CD4-positive, alpha-beta T cell (primary cell): ENCODE measurements at regions of chr18 and their contacts with region 1.

Region 1: GRCh38 chr18:63410792-63411191 is 11.5 kb downstream of the VPS4B start:
- DNase-seq: no peak
- ATAC-seq: no peak
- H3K4me3 ChIP-seq: no peak overlapping the region
- H3K4me3 Mint-ChIP-seq: no peak overlapping the region
- H3K27ac ChIP-seq: no peak overlapping the region
- H3K27ac Mint-ChIP-seq: peak overlapping the region; percentile 73
- H3K4me1 ChIP-seq: peaks cover 11% of the 10 kb centered on the region
- H3K4me1 Mint-ChIP-seq: peaks cover 57% of the 10 kb centered on the region
- H3K27me3 ChIP-seq: no peaks in the 10 kb centered on the region
- H3K27me3 Mint-ChIP-seq: no peaks in the 10 kb centered on the region
- CTCF ChIP-seq: no peak

Region 2: DNA sequence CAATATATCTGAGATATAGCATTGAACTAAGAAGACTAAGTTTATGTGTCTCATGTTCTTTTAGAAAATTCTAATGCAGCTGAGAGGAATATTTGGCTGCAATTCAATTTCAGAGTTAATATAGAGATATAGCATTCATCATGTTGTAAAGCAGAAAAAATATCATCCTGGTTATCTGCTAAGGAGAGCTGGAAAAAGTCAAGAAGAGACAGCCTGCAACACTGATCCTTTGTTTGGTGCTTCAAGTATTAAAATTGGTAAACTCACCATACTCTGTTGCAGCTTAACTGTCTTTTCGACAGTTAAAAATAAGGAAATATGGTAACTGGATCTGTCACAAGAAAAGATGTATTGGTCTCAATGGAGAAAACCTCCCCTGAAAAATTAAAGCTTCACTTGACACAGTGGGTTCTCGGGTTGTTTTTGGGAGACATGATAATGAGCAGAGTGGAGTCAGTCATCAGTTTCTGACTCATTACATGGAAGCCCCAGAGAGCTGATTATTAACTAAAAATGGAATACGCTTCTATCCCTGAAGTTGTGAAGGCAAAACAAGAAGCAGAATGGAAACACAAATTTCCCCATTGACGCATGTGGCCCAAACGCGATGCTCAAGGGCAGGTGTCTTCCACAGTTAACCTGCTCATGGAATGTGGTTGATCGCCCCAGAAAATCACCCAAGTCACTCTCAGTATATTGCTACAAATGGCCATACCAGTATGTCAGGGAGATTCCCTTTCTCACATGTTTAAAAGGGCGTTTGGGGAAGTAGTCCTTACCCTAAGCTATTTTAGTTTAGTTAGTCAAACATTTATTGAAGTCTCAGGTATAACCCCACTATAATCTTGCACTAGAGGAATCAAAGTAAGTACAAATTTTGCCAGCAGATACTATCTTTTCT is 99.4 kb before region 1 on chr18:
- CTCF ChIA-PET with region 1: no interaction called
- POLR2A ChIA-PET with region 1: no interaction called
- intact Hi-C with region 1: no loop called
- DNase-seq: no peak
- ATAC-seq: no peak
- H3K4me3 ChIP-seq: no peak overlapping the region
- H3K4me3 Mint-ChIP-seq: no peak overlapping the region
- H3K27ac ChIP-seq: peak overlapping the region in 1 of 2 donors; percentile 19
- H3K27ac Mint-ChIP-seq: peak overlapping the region; percentile 95
- H3K4me1 ChIP-seq: peaks cover 36% of the 10 kb centered on the region
- H3K4me1 Mint-ChIP-seq: peaks cover 92% of the 10 kb centered on the region
- H3K27me3 ChIP-seq: no peaks in the 10 kb centered on the region
- H3K27me3 Mint-ChIP-seq: no peaks in the 10 kb centered on the region
- CTCF ChIP-seq: no peak

Region 3: DNA sequence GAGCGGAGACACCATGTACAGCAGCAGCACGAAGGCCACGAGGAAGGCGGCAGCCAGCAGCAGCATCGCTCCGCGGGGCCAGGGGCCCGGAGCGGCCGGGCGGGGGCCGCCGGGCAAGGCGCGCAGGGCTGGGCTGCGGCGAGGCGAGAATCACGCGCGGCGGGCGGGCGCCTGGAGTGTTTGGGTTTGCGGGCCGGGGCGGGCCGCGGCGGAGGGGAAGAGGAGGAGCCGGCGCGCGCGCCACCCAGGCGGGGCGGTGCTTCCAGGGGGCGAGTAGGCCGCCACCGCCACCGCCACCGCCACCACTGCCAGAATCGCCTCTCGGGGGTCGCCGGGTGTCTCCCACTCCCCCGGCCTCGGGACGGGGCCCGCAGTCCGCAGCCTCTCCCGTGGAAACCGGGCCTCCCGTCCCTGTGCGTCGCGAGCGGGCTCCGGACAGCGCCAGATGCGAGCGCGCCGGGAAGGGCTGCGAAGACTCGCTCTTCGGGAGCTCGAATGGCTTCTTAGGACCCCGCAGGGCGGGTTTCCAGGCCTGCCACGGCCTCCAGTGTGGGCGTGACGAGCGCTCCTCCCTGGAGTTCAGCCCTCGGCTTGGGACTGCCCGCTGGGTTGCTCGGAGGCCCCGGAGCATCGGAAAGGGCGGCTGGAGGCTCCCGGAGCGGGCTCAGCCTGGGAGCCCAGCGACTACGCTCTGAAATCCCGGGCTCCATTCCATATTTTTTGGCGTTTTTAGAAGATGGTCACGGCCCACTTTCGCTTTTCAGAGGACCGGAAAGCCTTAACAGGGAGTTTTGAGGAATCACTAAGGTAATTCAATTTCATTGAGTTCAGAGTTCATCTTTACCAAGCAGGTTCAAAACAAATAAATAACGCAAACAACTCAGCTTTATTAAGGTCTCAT is 43.5 kb before region 1 on chr18 and contains the start of gene KDSR:
- CTCF ChIA-PET with region 1: no interaction called
- POLR2A ChIA-PET with region 1: interaction called, 4 read pairs
- intact Hi-C with region 1: loop called in 1 of 2 experiments (anchors 5 kb)
- DNase-seq: peak; percentile 63 to 91 (median 77)
- ATAC-seq: peak; percentile 80
- H3K4me3 ChIP-seq: peak within 1 kb of the TSS; percentile 94
- H3K4me3 Mint-ChIP-seq: peak within 1 kb of the TSS; percentile 94
- H3K27ac ChIP-seq: peak within 1 kb of the TSS; percentile 65 to 72
- H3K27ac Mint-ChIP-seq: peak within 1 kb of the TSS; percentile 91
- H3K4me1 ChIP-seq: peaks cover 33% of the 10 kb centered on the region
- H3K4me1 Mint-ChIP-seq: peaks cover 56% of the 10 kb centered on the region
- H3K27me3 ChIP-seq: no peaks in the 10 kb centered on the region
- H3K27me3 Mint-ChIP-seq: no peaks in the 10 kb centered on the region
- CTCF ChIP-seq: no peak
- total RNA-seq, gene KDSR: 21.1 to 23.5 TPM